ENCODE measurements at regions of chr3 and their contacts with region 1.

Region 1: DNA sequence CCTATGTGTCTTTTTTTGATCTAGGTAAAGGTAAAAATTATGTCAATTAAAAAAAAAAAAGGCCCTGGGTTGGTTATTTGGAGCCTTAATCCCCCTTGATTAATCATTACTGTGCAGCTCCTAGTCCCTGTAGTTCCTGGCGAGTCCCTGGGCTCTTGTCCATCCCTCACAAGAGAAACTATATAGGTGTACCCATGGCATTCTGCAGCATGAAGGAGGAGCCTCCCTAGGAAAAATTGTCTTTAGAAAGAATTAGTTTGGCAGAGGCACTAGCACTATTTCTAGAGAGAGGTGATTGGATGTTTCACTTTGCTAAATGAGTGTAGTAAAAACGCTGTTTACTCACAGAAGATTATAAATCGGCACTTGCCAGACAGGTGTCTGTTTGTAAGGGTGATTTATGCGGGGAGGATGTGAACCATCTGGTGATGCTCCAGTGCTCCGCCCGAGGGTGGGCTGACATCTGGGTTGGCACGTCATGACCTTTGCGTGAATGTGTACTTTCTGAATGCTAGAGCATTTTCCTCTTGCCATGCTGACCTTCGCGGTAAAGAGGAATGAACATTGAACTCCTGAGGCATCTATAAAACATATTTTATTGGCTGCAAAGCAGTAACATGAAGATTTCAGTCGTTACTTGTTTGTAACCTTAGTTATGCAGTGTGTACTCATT is 12.6 kb downstream of the PLCL2 start:
- DNase-seq: peak; percentile 77
- ATAC-seq: peak; percentile 88
- H3K4me3 ChIP-seq: peak overlapping the region in 4 of 5 experiments; percentile 1 to 48 (median 12)
- H3K4me3 Mint-ChIP-seq: peak overlapping the region; percentile 75
- H3K27ac ChIP-seq: peak overlapping the region; percentile 45 to 80
- H3K27ac Mint-ChIP-seq: peak overlapping the region; percentile 87
- H3K4me1 ChIP-seq: peaks cover 76 to 92% of the 10 kb centered on the region in 2 donors
- H3K4me1 Mint-ChIP-seq: peaks cover 88% of the 10 kb centered on the region
- H3K27me3 ChIP-seq: no peaks in the 10 kb centered on the region
- H3K27me3 Mint-ChIP-seq: no peaks in the 10 kb centered on the region
- CTCF ChIP-seq: no peak

Region 2: DNA sequence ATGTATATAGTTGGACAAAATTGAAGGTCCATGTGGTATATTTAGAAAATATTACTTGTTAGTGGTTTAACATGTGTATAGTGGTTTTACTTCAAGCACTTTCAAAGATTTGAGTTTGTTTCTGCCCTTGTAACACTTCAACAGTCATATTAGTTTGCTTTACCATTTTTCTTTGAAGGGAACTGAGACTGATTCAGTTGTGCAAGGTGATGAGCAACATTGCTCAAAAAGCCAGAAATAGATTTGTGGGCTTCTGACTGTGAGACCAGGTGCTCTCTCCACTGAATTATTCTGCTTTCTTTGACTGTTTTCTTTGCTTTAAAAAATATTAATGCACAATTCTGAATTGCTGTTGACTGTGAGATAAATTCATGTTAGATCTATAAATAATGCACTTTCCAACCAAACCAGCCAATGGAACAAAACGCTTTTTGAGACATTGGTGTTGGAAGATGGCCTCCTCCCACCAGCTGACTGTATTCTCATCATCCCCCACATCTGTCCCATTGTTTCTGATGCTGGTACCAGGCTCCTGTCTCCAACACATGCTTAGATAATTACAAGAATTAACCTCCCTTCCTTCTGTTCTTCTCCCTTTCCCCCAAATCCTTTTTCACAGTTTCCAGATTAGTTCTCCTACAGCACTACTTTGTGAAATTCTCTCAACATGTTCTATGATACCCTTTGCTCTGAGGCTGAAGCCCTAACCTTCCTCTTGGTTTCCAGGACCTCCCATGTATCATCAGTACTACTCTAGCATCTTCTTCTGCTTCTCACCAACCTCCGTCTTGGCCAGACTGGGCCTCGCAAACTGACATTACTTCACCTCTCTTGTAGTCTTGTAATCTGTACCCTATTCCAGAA is 15.2 kb after region 1 on chr3:
- CTCF ChIA-PET with region 1: interaction called, 4 read pairs
- POLR2A ChIA-PET with region 1: interaction called, 7 read pairs
- intact Hi-C with region 1: loop called (anchors 2 kb)
- DNase-seq: peak; percentile 55
- ATAC-seq: peak; percentile 86
- H3K4me3 ChIP-seq: peak overlapping the region in 1 of 5 experiments; percentile 52
- H3K4me3 Mint-ChIP-seq: peak overlapping the region; percentile 70
- H3K27ac ChIP-seq: peak overlapping the region; percentile 77 to 88
- H3K27ac Mint-ChIP-seq: peak overlapping the region; percentile 87
- H3K4me1 ChIP-seq: peaks cover 69 to 78% of the 10 kb centered on the region in 2 donors
- H3K4me1 Mint-ChIP-seq: peaks cover 71% of the 10 kb centered on the region
- H3K27me3 ChIP-seq: no peaks in the 10 kb centered on the region
- H3K27me3 Mint-ChIP-seq: no peaks in the 10 kb centered on the region
- CTCF ChIP-seq: no peak